ENCODE measurements at regions of chr5 and their contacts with region 1.

Region 1: GRCh38 chr5:139517683-139518564 is 35.4 kb upstream of the STING1 start:
- DNase-seq: peak; percentile 90 to 94
- ATAC-seq: peak; percentile 90 to 95 (median 94)
- H3K4me3 ChIP-seq: peak overlapping the region; percentile 31 to 66 (median 57)
- H3K27ac ChIP-seq: peak overlapping the region; percentile 68 to 92 (median 90)
- H3K4me1 ChIP-seq: peaks cover 0 to 29% (median 17%) of the 10 kb centered on the region in 9 donors
- H3K27me3 ChIP-seq: no peaks in the 10 kb centered on the region
- CTCF ChIP-seq: peak; percentile 92 to 99 (median 99)

Region 2: DNA sequence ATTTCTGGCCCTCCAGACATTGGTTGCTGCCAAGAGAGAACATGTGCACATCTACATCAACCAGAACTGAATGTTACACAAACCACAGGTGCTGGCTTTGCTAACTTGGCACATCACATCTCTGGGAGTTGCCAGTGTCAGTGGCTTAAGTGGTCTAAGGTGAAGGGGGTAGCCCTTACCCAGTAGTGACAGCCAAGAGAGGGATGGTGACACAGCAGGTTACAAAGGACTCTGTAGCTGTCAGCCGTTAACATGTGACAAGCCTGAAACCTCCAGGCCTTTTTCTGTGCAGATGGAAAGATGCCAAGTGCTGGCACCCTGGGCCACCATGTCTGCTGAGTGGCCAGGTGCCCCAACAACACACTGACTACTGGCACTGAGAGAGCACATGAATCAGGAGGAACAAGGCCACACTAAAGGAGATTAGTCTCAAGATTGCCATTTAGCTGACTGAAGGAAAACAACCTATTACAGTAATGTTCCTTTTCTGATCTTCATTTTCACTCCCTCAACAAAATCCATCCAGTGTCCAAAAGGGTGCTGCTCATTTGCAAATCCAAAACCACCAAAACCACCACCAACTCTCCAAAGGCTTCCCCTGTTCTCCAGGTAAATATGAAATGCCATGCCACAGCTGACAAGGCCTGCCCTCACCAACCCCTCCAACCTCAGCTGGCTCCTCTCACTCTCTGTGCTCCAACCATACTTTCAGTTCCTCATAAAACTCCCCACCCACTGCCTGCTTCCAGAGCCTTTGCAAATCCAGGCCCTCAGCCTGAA is 339.9 kb before region 1 on chr5:
- intact Hi-C with region 1: no loop called
- DNase-seq: peak; percentile 56 to 73
- ATAC-seq: peak; percentile 84 to 97 (median 94)
- H3K4me3 ChIP-seq: no peak overlapping the region
- H3K27ac ChIP-seq: peak overlapping the region; percentile 35 to 83 (median 72)
- H3K4me1 ChIP-seq: peaks cover 5 to 59% (median 47%) of the 10 kb centered on the region in 9 donors
- H3K27me3 ChIP-seq: no peaks in the 10 kb centered on the region
- CTCF ChIP-seq: no peak

Region 3: GRCh38 chr5:139315056-139315615 is 202.8 kb before region 1 on chr5:
- intact Hi-C with region 1: no loop called
- DNase-seq: no peak
- ATAC-seq: no peak
- H3K4me3 ChIP-seq: no peak overlapping the region
- H3K27ac ChIP-seq: no peak overlapping the region
- H3K4me1 ChIP-seq: peaks cover 7 to 64% (median 49%) of the 10 kb centered on the region in 9 donors
- H3K27me3 ChIP-seq: no peaks in the 10 kb centered on the region
- CTCF ChIP-seq: no peak

Region 4: DNA sequence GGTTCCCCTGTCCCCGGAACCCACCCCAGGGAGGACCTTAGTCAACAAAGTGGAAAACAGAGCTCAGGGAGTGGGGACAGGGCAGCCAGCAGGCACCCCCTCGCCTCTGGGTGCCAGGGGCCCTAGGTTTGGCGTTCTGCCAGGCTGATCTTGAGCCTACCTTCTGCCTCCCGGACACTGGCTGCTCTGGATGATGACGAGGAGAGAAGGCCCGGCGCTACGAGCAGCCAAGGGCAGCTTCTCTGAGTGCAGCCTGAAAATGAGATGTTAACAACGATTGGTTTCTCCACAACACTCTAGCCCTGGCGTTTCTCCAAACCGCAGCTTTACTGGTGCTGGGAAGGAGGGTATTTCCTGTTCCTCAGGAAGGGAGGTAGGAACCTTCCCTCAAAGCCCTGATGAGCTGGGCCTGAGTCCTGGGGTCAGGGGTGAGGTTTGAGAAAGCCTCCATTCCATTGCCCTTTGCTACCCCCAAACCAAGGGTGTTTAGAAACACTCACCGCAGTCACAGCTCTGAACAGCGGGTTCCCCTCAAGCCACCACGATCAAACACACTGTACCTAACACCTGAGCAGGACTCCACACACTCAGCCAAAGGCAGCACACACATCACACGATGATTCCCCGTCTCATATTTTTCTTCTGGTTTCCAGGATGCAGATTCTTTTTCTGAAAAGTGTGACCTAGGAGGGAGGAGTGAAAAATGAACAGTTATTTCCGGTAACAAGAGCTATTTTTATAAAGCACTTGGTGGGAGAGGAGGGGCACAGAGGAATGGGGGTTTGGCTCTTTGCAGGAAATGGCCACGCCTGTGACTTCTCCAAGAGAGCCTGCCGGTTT is 35.7 kb before region 1 on chr5 and contains the start of gene STING1:
- intact Hi-C with region 1: loop called in 1 of 10 experiments (anchors 5 kb)
- DNase-seq: peak; percentile 71 to 85
- ATAC-seq: peak; percentile 73 to 80 (median 76)
- H3K4me3 ChIP-seq: peak within 1 kb of the TSS; percentile 42 to 71 (median 60)
- H3K27ac ChIP-seq: peak within 1 kb of the TSS; percentile 89 to 97 (median 96)
- H3K4me1 ChIP-seq: peaks cover 16 to 77% (median 56%) of the 10 kb centered on the region in 9 donors
- H3K27me3 ChIP-seq: no peaks in the 10 kb centered on the region
- CTCF ChIP-seq: peak in 1 of 9 donors; percentile 7
- total RNA-seq, gene STING1: 27.2 to 116 (median 55.7) TPM

Region 5: GRCh38 chr5:139551191-139551889 is 33.4 kb after region 1 on chr5:
- intact Hi-C with region 1: loop called in 1 of 10 experiments (anchors 5 kb)
- DNase-seq: no peak
- ATAC-seq: no peak
- H3K4me3 ChIP-seq: no peak overlapping the region
- H3K27ac ChIP-seq: no peak overlapping the region
- H3K4me1 ChIP-seq: no peaks in the 10 kb centered on the region
- H3K27me3 ChIP-seq: no peaks in the 10 kb centered on the region
- CTCF ChIP-seq: no peak

Region 6: DNA sequence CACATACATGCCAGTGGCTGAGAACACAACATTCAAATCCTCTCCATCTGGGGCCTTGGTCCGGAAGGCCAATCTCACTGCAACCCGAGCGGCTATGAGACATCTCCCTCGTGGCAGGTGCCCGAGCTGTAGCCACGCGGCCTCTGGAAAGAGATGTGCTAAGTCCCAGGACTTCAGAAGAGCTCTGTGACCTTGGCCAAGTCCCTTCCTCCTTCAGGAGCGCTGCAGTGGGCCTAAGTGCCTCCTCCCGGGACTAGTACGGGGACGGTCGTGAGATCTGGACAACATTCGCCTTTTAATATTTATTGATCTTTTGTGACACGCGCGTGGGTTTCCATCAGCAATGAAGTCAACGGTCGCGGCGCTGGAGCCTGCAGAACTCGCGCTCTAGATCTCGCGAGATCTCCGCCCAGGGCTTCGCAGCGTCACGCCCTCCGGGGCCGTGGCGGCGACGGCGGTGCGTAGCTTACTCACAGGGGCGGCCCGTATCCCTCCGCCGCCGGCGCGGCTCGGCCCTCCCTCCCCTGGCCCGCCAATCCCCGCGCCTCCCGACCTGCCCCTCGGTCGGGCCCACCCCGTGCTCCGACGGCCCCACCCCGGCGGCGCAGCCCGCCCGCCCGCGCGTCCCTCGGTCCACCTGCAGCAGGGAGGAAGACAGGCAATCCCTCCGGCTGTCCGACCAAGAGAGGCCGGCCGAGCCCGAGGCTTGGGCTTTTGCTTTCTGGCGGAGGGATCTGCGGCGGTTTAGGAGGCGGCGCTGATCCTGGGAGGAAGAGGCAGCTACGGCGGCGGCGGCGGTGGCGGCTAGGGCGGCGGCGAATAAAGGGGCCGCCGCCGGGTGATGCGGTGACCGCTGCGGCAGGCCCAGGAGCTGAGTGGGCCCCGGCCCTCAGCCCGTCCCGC is 43.1 kb after region 1 on chr5 and contains the start of gene UBE2D2:
- intact Hi-C with region 1: loop called in 2 of 10 experiments (anchors 5 kb)
- DNase-seq: peak; percentile 97 to 99
- ATAC-seq: peak; percentile 97 to 99 (median 98)
- H3K4me3 ChIP-seq: peak within 1 kb of the TSS; percentile 74 to 99 (median 90)
- H3K27ac ChIP-seq: peak within 1 kb of the TSS; percentile 84 to 99 (median 98)
- H3K4me1 ChIP-seq: peaks cover 6 to 46% (median 44%) of the 10 kb centered on the region in 9 donors
- H3K27me3 ChIP-seq: no peaks in the 10 kb centered on the region
- CTCF ChIP-seq: no peak
- total RNA-seq, gene UBE2D2: 121 to 162 (median 141) TPM

Region 7: DNA sequence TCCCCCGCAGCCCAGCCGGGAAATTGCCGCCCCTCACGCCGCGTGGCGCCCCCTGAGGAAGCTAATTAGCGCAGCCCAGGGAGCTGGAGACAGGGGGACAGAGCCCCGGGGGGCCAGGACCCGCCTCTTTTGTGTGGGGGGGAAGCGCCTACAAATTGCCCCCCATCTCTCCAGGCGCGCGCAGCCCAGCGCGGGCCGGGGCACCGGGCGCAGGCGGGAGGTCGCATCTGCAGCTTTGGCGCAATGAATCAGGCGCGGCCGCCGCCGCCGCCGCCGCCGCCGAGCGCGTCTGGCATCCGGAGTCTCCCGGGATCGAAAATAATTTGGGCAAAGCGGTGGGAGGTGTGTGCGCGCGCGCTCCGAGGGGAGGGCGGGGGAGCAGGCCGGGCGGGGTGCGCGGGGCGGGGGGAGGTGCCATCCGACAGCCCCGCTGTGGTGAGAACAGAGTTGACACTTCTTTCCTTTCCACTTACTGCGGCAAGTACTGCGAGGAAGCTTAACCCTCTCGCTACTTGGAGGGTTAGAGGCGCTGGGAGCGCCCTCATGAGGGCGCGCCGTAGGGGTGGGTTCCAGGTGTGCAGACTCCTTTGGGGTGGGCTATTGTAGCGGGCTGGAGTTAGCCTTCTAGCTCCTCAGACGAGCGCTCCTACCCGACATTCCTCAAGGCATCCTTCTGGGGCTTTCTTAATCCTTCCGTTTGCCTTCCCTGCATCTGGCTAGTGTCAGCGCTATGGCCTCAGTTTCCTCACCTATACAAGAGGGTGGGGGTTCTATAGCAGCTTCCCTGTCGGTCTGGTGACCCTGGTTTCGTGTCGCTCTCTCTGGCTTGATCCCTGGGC is 193.4 kb after region 1 on chr5:
- intact Hi-C with region 1: no loop called
- DNase-seq: peak in 1 of 2 donors; percentile 45
- ATAC-seq: peak in 7 of 8 donors; percentile 2 to 21 (median 6)
- H3K4me3 ChIP-seq: peak overlapping the region; percentile 18 to 65 (median 60)
- H3K27ac ChIP-seq: peak overlapping the region in 7 of 10 donors; percentile 11 to 88 (median 85)
- H3K4me1 ChIP-seq: peaks cover 12 to 40% (median 36%) of the 10 kb centered on the region in 9 donors
- H3K27me3 ChIP-seq: peaks cover 0 to 44% (median 0%) of the 10 kb centered on the region in 7 donors
- CTCF ChIP-seq: peak in 2 of 9 donors; percentile 10 to 24

Measured in heart right ventricle (tissue), 16 donors.